Cardiac septum (tissue), 1 donor: ENCODE measurements at regions of chr9 and their contacts with region 1.

Region 1: DNA sequence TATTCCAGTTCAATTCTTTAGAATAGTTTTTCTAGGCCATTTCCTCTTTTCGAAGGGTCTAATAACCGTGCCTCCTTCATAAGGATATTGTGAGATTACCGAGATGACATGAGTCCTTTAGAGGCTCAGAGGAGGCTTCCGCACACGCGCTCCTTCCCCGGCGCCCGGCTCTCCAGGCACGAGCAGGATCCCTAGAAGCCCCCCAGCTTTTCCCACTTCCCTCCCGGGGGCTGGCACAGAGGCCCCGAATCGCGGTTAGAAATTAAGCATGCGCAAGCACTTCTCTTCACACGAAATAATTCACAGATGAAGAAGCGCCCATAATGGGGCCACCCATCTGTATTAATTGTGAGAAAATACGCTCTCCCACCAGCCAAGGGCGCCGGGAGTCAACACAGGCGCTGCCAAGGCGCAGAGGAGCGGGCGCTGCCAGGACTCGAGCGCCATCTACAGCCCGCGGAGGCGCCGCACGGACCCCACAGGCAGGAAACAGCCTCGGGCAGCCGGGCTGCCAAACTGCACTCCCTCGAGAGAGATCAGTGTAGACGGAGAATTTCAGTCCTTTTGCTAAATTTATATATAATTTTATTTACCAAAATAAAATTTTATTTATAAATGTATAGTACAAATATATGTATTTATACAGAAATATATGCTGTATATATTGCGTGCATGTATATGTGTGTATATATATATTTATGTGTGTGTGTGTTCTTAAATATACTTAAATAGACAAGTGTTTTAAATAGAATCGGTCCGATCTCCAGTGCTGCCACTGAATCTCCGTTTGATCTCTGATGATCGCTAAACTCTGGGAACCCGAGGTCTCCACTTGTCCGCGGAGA is 258.1 kb upstream of the NFIL3 start:
- DNase-seq: peak; percentile 87

Region 2: GRCh38 chr9:90914868-90915483 is 766.7 kb before region 1 on chr9:
- intact Hi-C with region 1: loop called (anchors 5 kb)
- DNase-seq: peak; percentile 89

Region 3: DNA sequence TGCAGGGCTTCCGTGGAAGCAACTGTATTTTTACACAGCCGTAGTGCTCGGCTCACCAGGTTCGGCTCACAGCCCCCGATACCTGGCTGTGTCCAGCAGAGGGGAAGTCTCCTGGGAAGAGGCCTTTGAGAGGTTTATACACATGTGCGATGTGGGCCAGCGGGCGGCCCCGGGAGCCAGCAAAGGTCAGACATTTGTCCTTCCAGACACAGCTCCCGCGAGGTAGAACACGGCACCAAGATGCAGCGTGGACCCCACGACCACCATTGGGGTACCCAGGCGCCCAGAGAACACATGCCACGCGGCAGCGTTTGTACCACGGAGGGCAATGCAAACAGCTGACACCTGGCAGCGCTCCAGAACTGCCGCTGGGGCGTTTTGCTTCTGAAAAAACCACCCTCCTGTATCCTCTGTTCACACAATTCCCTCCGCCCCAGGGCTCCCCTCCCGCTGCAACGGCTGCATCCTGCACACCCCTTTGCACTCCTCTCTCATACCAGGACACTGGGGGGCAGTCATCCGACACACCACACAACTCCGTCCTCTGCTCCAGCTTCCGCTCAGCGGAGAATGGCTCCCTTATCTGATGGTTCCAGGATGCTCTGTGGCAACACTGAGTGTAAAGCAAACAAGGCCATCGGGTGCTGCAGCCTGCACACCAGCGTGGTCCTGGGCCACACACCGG is 644.7 kb before region 1 on chr9:
- intact Hi-C with region 1: loop called (anchors 10 kb)
- DNase-seq: peak; percentile 87

Region 4: DNA sequence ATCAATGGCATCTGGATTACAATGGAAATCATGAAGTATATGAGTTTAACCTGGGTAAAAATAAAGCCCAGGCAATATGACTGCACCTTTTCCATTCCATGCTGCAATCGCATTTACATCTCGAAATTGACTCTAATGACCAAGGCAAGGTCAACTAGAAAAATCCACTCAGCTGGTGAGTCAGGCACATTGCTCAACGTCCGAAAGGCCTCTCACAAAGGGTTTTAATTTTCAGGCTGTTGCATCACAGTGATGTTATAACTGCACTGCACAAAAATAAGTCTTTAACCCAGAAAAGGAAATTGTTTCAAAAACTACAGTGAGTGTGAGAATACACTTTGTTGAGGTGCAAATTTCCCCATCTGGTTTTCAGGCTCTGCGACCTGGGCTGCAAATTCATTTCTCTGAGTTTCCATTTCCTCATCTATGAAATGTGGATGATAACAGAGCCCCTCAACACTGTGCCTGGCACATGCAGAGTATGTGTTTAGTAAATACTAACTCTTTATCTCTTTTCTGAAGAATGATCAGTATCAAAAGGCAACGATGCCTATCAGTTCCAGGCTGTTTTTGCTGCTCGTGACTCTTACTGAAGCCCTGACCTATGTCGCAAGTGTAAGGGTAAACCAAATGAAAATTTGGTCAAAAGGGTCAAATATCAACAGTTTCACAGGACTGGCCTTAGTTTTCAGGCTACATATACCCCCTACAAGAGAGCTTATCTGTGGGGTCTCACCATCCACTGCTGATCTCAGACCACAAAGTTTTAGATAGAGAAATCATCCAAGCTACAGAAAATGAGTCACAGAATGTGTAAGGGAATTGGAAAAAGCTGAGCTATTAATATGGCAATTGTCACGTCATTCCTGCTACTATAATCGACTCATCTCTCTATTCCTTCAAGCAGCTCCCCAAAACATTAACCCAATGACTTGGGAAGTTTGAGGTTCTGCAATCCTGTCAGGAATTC is 262.2 kb before region 1 on chr9:
- intact Hi-C with region 1: no loop called
- DNase-seq: peak; percentile 85

Region 5: GRCh38 chr9:91495450-91495849 is 186.2 kb before region 1 on chr9:
- intact Hi-C with region 1: loop called (anchors 5 kb)
- DNase-seq: no peak